Left cardiac atrium (tissue), 4 donors: ENCODE measurements at regions of chr10 and their contacts with region 1.

Region 1: GRCh38 chr10:96089670-96090462 is 40.2 kb upstream of the ZNF518A start:
- DNase-seq: peak; percentile 95
- ATAC-seq: peak; percentile 99

Region 2: GRCh38 chr10:96129387-96130325 is 39.8 kb after region 1 on chr10 and contains the start of gene ZNF518A:
- intact Hi-C with region 1: loop called (anchors 1 to 2 kb)
- DNase-seq: peak; percentile 95
- ATAC-seq: peak; percentile 98 to 99
- total RNA-seq, gene ZNF518A: 10.5 to 12.4 TPM